A673 (cell line): ENCODE measurements at regions of chr4 and their contacts with region 1.

Region 1: DNA sequence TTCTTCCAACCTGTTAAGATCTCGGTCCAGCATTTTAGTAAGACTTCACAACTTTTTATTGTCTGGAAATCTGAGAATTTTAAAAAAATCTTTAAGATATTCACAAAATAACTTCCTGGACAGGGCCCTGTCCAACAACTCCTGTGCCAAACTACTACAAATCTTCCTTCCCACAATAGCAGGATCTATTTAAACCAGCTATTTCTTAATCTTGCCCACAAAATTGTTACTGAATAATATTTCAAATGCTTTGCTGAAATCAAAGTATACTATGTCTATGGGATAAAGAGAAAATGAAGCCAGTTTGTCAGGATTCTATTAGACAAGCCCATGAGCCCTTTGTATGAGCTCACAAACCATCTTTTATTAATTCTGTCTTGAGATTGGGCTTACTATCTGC is 104.1 kb upstream of the DDIT4L start:
- DNase-seq: no peak
- H3K4me3 ChIP-seq: no peak overlapping the region
- H3K27ac ChIP-seq: no peak overlapping the region
- H3K4me1 ChIP-seq: no peaks in the 10 kb centered on the region
- H3K27me3 ChIP-seq: no peaks in the 10 kb centered on the region
- CTCF ChIP-seq: no peak

Region 2: DNA sequence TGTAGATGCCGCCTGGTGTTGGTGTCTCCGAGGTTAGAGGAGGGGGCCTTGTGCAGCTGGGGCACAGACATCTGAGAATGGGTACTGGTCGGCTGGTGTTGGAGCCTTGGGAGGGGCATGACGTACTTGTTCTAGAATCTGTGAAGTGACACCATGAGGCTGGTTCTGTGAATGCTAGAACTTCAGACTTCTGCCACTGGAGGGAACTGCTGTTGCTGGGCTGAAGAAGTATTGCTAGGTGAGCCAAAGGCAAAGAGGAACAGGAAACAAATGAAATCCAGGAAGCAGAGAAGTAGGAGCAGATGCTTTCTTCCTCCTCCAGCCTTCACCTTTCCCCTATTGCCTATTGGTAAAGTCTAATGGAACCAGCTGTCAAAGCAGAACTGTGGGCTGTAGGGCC is 16.8 kb after region 1 on chr4:
- CTCF ChIA-PET with region 1: no interaction called
- POLR2A ChIA-PET with region 1: interaction called, 12 read pairs
- intact Hi-C with region 1: no loop called
- DNase-seq: no peak
- H3K4me3 ChIP-seq: no peak overlapping the region
- H3K27ac ChIP-seq: no peak overlapping the region
- H3K4me1 ChIP-seq: no peaks in the 10 kb centered on the region
- H3K27me3 ChIP-seq: no peaks in the 10 kb centered on the region
- CTCF ChIP-seq: peak; percentile 25; the same call in 1 of the 2 replicates